Calu3 (cell line): ENCODE measurements at regions of chr2 and their contacts with region 1.

Region 1: GRCh38 chr2:203164311-203164935 is 74.4 kb upstream of the CYP20A1 start:
- DNase-seq: no peak
- H3K4me3 Mint-ChIP-seq: no peak overlapping the region
- H3K27ac Mint-ChIP-seq: no peak overlapping the region
- H3K4me1 Mint-ChIP-seq: no peaks in the 10 kb centered on the region
- H3K27me3 Mint-ChIP-seq: no peaks in the 10 kb centered on the region
- CTCF ChIP-seq: no peak

Region 2: GRCh38 chr2:202717598-202718310 is 446.7 kb before region 1 on chr2:
- CTCF ChIA-PET with region 1: interaction called, 10 read pairs
- intact Hi-C with region 1: no loop called
- DNase-seq: no peak
- H3K4me3 Mint-ChIP-seq: no peak overlapping the region
- H3K27ac Mint-ChIP-seq: no peak overlapping the region
- H3K4me1 Mint-ChIP-seq: peaks cover 12% of the 10 kb centered on the region
- H3K27me3 Mint-ChIP-seq: no peaks in the 10 kb centered on the region
- CTCF ChIP-seq: no peak

Region 3: GRCh38 chr2:203683932-203684556 is 519.6 kb after region 1 on chr2:
- CTCF ChIA-PET with region 1: no interaction called
- intact Hi-C with region 1: no loop called
- DNase-seq: peak; percentile 81
- H3K4me3 Mint-ChIP-seq: peak overlapping the region; percentile 52
- H3K27ac Mint-ChIP-seq: peak overlapping the region; percentile 100
- H3K4me1 Mint-ChIP-seq: peaks cover 76% of the 10 kb centered on the region
- H3K27me3 Mint-ChIP-seq: no peaks in the 10 kb centered on the region
- CTCF ChIP-seq: no peak